ENCODE measurements at regions of chr21 and their contacts with region 1.

Region 1: DNA sequence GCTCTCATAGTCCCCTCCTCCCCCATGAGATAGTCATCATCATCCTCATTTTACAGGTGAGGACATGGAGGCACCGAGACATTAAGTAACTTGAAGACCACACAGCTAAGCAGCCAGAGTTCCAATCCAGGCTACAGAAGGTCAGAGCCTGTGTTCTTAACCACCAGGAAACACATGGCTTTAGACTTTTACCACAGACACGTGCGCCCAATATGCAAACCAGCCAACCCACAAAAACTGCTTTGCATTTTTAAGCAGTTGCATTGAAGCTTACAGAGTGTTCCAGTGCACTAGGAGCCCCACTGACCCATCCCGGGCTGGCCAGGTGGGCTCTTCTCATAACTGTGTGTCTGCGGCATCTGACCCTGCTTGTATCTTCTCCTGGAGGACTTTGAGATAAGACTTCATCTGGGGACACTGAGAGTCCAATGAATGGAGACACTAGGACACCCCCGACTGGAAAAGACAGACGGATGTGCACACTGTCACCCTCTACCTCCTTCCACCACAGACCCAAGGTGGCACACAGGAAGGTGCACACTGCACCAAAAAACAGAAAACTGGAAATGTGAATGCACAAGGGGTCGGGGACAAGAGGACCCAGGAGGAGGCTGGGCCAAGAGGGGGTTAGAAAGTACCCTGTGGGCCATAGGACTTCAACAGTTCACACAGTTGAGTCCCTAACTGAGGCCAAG is 56.4 kb downstream of the ETS2 start:
- DNase-seq: peak; percentile 39
- ATAC-seq: peak; percentile 78
- H3K4me3 Mint-ChIP-seq: peak overlapping the region; percentile 44
- H3K27ac Mint-ChIP-seq: peak overlapping the region; percentile 18
- H3K4me1 Mint-ChIP-seq: peaks cover 27% of the 10 kb centered on the region
- H3K27me3 Mint-ChIP-seq: peaks cover 57% of the 10 kb centered on the region
- CTCF ChIP-seq: no peak

Region 2: DNA sequence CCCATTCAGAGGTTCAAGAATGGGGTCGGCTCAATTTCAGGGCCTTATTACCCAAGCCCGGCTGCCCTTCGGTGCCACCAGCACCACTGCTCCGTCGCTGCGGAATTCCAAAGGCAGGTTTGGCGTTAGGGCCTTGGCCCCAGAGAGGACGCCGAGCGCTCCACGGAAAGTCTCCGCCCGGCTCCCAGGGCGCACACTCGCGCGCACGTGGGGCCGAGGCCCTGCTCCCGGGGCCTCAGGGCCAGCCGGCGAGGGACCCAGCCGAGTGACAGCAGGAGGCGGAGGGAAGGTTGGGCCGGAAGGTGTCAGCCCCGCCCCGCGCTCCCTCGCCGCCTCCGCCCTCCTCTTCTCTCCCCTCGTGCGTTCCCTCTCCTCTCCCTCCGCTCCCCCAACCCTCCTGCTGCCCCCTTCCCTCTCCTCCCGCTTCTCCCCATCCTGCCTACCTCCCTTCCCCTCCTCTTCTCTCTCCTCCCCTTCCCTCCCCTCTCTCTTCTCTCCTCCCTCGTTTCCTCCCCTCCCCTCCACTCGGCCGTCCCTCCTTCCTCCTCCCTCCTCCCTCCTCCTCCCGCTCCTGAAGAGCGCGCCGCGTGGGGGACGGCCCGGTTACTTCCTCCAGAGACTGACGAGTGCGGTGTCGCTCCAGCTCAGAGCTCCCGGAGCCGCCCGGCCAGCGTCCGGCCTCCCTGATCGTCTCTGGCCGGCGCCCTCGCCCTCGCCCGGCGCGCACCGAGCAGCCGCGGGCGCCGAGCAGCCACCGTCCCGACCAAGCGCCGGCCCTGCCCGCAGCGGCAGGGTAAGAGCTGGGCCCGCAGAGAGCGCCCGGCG is 56.6 kb before region 1 on chr21 and contains the start of gene ETS2:
- CTCF ChIA-PET with region 1: no interaction called
- POLR2A ChIA-PET with region 1: no interaction called
- intact Hi-C with region 1: loop called (anchors 2 kb)
- DNase-seq: peak; percentile 55
- ATAC-seq: peak; percentile 83
- H3K4me3 Mint-ChIP-seq: peak within 1 kb of the TSS; percentile 83
- H3K27ac Mint-ChIP-seq: peak within 1 kb of the TSS; percentile 30
- H3K4me1 Mint-ChIP-seq: peaks cover 16% of the 10 kb centered on the region
- H3K27me3 Mint-ChIP-seq: peaks cover 9% of the 10 kb centered on the region
- CTCF ChIP-seq: no peak
- total RNA-seq, gene ETS2: 4.4 and 4.5 TPM in 2 replicates

Region 3: DNA sequence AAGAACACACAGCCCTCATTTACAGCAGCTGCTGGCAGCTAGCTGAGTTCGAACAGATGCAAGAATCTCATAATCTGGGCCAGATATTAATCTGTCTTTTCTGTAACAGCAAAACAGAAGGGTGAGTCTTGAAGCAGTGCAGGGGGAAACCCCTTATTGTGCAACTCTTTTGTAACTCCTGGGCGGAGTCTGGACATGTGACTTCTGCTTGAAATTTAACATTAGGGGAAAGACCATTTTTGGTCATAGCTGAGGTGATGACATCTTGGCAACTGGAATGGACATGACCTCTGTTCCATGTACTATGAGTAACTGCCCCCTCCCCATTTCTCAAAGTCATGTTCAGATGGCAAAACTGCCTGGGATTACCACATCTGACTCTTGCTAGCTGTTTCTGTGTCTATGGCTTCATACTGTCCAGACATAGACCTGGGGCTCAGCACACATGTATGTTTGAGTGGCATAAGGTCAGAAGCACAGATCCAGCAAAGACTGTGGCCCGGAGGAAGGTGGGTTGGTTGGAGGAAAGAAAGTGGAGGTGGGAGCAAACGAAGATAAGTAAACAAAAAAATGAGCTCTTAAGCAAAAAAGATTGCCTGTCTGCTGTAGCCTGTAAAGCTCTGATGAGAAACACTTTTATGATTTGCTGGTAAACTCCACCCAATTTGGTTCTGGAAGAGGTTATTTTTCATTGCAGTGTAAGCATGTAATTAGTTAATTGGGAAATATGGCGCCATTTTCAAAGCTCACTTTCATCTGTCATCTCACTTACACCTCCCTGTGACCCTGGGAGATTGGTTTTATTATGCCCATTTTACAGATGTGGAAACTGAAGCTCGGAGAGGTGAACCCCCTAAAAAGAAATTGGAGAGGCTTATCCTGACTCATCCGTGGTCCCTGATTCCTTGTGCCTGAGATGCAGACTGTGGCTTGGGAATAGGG is 30.3 kb before region 1 on chr21:
- CTCF ChIA-PET with region 1: no interaction called
- POLR2A ChIA-PET with region 1: no interaction called
- intact Hi-C with region 1: loop called (anchors 1 kb)
- DNase-seq: no peak
- ATAC-seq: peak; percentile 88
- H3K4me3 Mint-ChIP-seq: peak overlapping the region; percentile 29
- H3K27ac Mint-ChIP-seq: peak overlapping the region; percentile 65
- H3K4me1 Mint-ChIP-seq: peaks cover 17% of the 10 kb centered on the region
- H3K27me3 Mint-ChIP-seq: peaks cover 18% of the 10 kb centered on the region
- CTCF ChIP-seq: no peak

Region 4: GRCh38 chr21:38848187-38848609 is 13.9 kb before region 1 on chr21:
- CTCF ChIA-PET with region 1: no interaction called
- POLR2A ChIA-PET with region 1: interaction called, 10 read pairs
- intact Hi-C with region 1: loop called (anchors 1 kb)
- DNase-seq: no peak
- ATAC-seq: no peak
- H3K4me3 Mint-ChIP-seq: no peak overlapping the region
- H3K27ac Mint-ChIP-seq: no peak overlapping the region
- H3K4me1 Mint-ChIP-seq: peaks cover 5% of the 10 kb centered on the region
- H3K27me3 Mint-ChIP-seq: peaks cover 24% of the 10 kb centered on the region
- CTCF ChIP-seq: no peak

Region 5: DNA sequence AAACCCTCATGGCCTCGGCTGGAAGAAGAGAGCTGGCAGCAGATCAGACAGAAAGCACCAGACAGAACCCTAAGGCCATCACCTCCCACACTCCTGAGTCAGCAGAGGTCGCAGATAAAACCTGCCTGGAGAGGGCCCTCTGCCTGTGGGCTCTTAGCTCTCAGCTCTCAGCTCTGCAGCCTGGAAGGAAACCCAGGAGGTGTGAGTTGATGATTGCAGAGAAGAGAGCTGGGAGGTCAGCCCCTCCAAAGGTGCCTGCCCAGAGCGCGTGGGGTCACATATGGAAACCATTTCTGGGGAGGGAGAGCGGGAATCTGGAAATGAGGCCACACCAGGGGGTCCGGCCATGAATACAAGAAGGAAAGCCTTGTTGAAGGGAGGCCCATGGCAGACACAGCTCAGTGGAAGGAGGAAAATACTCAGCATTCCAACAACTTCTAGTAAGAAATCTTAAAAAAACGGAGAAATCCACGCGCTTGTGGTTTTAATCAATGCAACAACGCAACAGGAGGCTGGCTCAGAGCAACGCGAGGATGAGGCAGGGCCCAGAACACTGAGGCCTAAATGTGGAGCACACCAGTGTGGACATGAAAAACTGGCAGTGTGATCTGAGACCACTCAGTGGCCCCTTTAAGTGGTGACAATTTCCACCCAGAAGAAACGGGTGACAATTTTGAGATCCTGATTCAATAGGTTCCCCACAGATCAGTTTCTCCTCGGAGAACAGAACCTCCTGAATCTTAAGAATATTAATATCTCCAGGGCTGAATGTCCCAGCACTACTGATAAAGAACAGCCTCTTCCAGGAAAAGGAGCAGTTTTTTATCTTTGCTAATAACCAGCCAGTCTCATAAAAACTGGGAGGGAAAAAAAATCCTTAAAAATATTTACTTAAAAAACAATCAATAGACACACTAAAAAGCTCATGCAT is 275.4 kb after region 1 on chr21:
- CTCF ChIA-PET with region 1: no interaction called
- POLR2A ChIA-PET with region 1: no interaction called
- intact Hi-C with region 1: no loop called
- DNase-seq: no peak
- ATAC-seq: no peak
- H3K4me3 Mint-ChIP-seq: no peak overlapping the region
- H3K27ac Mint-ChIP-seq: no peak overlapping the region
- H3K4me1 Mint-ChIP-seq: no peaks in the 10 kb centered on the region
- H3K27me3 Mint-ChIP-seq: peaks cover 3% of the 10 kb centered on the region
- CTCF ChIP-seq: no peak